ENCODE measurements at regions of chr1 and their contacts with region 1.

Region 1: DNA sequence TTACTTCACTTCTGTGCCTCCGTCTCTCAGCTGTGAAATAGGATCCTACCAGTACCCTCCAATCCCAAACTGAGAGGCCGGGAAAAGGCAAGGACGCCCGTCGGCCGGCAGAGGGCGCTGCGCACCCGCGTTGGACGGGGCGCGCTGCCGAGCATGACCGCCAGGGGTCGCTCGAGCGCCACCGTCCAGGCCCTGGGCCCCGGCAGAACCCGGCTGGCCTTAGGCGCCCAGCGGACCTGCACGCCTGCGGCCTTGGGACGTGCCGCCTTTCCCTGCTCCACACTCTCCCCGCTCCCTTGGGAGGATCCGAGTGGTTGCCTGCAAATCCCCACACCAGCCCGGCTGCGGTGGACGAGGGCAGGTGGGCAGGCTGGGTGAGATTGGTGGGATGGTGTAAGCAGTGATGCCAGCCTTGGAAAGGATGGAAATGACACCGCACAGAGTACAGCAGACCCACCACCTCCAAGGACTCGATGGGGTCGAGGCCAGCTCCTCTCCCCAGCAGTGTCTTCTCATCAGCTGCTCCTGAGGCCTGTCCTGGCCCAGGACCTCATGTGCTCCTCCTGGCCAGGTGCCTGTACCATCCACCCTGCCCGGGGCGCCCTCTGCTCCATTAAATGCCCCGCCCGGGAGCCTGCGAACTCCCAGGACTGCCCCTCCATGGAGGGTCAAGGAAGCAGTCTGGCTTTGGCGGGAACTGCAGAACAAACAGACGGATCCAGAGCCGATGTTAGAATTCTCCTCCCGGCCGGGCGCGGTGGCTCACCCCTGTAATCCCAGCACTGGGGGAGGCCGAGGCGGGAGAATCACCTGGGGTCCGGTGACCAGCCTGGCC is 47.4 kb upstream of the LBR start:
- DNase-seq: peak; percentile 56
- H3K4me3 Mint-ChIP-seq: no peak overlapping the region
- H3K27ac Mint-ChIP-seq: peak overlapping the region; percentile 28
- H3K4me1 Mint-ChIP-seq: peaks cover 62% of the 10 kb centered on the region
- H3K27me3 Mint-ChIP-seq: no peaks in the 10 kb centered on the region

Region 2: GRCh38 chr1:225318706-225319575 is 156.3 kb before region 1 on chr1:
- CTCF ChIA-PET with region 1: no interaction called
- POLR2A ChIA-PET with region 1: no interaction called
- DNase-seq: peak; percentile 47
- H3K4me3 Mint-ChIP-seq: no peak overlapping the region
- H3K27ac Mint-ChIP-seq: no peak overlapping the region
- H3K4me1 Mint-ChIP-seq: no peaks in the 10 kb centered on the region
- H3K27me3 Mint-ChIP-seq: no peaks in the 10 kb centered on the region

Region 3: DNA sequence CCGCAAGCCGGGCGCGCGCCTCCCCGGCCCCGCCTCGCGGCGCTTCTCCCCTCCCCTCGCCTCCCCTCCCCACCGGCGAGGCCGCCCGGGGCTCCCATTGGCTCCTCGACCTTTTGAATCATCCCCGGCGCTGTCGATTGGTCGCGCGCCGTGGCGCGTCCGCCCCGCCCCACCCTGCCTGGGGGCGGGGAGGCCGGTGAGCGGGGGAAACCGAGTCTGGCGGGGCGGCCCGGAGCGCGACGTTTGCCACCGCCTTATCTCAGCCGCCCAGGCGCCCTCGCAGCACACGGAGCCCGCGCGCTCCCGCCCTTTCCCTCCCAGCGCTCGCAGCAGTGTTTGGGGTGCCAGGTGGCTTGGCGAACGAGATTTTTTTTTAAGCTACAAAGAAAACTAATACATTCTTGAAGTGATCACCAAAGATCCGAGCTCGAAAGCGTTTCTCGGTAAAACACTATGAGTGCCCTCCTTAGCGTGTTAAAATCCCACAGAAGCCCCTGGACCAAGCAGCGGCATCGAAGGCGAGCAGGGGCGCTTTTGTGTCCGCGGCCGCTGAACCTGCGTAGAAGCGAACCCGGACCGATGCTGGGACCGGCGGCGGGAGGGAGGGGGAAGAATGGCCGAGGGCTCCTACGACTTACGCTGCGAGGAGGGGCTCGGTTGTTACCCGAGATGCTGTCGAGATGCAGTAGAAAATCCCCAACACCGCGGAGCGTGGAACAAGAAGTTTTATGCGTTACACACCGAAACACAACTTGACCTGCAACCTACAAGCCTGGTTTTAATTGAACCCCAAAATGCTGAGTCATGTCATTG is 46.9 kb before region 1 on chr1:
- CTCF ChIA-PET with region 1: interaction called, 10 read pairs
- POLR2A ChIA-PET with region 1: no interaction called
- DNase-seq: peak; percentile 93
- H3K4me3 Mint-ChIP-seq: peak overlapping the region; percentile 90
- H3K27ac Mint-ChIP-seq: peak overlapping the region; percentile 96
- H3K4me1 Mint-ChIP-seq: peaks cover 50% of the 10 kb centered on the region
- H3K27me3 Mint-ChIP-seq: no peaks in the 10 kb centered on the region

Region 4: GRCh38 chr1:225447650-225448089 is 27.5 kb before region 1 on chr1:
- CTCF ChIA-PET with region 1: interaction called, 10 read pairs
- POLR2A ChIA-PET with region 1: interaction called, 3 read pairs
- DNase-seq: no peak
- H3K4me3 Mint-ChIP-seq: no peak overlapping the region
- H3K27ac Mint-ChIP-seq: peak overlapping the region; percentile 7
- H3K4me1 Mint-ChIP-seq: peaks cover 61% of the 10 kb centered on the region
- H3K27me3 Mint-ChIP-seq: no peaks in the 10 kb centered on the region

Region 5: DNA sequence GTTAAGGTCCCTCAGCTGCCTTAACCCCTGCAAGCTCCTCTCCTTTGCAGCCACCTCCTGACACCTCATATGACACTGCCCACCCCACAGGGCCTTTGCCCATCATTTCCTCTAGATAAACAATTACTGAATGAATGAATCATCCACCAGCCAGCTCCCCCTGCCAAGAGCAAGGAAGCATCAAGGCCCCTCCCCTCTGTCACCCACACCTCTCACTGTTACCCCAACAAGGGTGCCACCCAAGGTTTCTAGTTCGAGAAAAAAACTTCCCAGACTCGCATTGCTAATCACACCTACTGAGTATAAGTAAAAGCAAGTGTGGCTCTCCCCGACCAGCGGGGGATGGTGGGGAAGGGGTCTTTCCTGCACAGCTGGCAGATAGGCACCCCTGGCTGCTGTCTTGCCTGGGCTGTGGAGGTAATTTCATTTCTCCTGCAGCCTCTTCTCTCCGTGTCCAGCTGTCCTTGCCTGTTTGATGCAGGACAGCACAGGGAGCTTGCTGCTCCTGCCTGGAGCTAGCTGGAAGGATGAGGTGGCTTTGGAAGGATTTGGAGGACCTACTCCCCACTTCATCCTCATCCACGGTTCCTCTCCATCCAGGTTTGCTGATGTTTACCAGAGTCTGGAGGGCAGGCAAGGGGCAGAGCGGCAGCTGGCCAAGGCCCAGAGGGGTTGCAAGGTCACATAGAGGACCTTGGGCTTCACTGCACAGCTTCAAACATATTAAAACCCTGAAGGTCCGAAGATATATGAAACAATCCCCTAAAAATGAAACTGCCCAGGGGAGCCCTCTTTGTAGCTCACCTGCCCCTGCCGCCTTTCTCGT is 14.3 kb before region 1 on chr1:
- CTCF ChIA-PET with region 1: interaction called, 18 read pairs
- POLR2A ChIA-PET with region 1: no interaction called
- DNase-seq: peak; percentile 48
- H3K4me3 Mint-ChIP-seq: no peak overlapping the region
- H3K27ac Mint-ChIP-seq: peak overlapping the region; percentile 61
- H3K4me1 Mint-ChIP-seq: peaks cover 65% of the 10 kb centered on the region
- H3K27me3 Mint-ChIP-seq: no peaks in the 10 kb centered on the region

Region 6: DNA sequence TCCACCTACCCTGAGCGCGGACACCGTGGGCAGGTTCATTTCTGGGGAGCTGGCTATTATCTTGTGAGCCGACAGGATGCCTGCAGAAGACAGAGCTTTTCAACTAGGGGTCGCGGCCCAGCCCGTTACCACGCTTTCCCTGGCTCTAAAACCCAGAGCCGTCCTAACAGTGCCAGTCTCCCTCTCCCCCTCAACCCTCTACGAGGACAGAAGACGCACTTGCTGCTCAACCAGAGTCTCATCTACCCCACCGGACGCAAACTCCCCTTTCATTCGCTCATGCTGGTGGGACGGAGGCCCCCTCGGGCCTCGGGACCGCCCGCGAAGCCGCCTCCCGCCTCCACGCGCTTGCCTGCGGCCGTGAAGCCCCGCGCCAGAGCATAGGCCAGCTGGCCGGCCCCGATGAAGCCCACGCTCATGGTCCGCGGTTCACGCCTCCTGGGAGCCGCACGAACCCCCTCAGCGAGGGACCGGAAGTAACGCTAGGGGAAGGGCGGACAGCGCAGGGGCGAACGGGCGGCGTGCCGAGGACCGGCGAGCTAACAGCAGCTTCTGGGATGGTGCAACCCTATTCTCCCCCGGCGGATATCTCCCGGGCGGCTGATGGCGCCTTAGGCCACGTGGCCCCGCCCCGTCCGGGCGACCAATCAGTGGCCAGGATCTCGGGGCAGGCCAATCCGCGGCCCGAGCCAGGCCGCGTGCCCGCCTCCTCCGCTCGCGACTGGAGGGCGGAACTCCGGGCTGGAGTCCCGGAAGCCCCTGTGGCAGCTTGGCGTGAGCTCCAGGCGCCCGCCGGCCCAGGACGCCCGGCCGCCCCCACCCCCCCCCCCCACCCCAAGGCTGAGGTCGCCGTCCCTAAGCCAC is 448.7 kb after region 1 on chr1 and contains the start of gene PYCR2:
- CTCF ChIA-PET with region 1: interaction called, 10 read pairs
- POLR2A ChIA-PET with region 1: no interaction called
- DNase-seq: peak; percentile 95
- H3K4me3 Mint-ChIP-seq: peak within 1 kb of the TSS; percentile 98
- H3K27ac Mint-ChIP-seq: peak within 1 kb of the TSS; percentile 96
- H3K4me1 Mint-ChIP-seq: peaks cover 65% of the 10 kb centered on the region
- H3K27me3 Mint-ChIP-seq: no peaks in the 10 kb centered on the region
- total RNA-seq, gene PYCR2: 98.1 to 120 TPM

Region 7: DNA sequence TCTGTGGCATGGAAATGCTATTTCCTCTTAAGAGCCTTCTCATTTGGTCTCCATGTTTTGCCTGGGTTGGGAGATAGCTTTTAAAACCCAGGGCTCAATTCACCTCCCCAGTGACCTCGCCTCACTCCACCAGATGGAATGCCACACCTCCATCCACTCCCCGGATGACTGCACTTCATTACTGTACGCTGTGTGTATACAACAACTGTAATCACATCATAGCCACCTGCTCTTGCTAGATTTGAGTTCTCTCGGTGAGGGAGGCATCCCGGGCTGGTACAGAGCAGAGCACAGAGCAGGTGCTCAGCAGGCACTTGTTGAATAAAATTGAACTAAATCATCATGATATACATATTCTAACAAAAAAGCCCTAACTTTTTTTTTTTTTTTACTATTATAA is 498.0 kb after region 1 on chr1:
- CTCF ChIA-PET with region 1: interaction called, 11 read pairs
- POLR2A ChIA-PET with region 1: no interaction called
- DNase-seq: no peak
- H3K4me3 Mint-ChIP-seq: no peak overlapping the region
- H3K27ac Mint-ChIP-seq: no peak overlapping the region
- H3K4me1 Mint-ChIP-seq: peaks cover 7% of the 10 kb centered on the region
- H3K27me3 Mint-ChIP-seq: no peaks in the 10 kb centered on the region

Measured in activated CD4-positive, alpha-beta T cell treated with anti-CD3 and anti-CD28 coated beads, Interleukin-2, amount 10 ng/mL, durations not matched to agents 7 days and 5 days (primary cell).